ENCODE measurements at regions of chr2 and their contacts with region 1.

Region 1: DNA sequence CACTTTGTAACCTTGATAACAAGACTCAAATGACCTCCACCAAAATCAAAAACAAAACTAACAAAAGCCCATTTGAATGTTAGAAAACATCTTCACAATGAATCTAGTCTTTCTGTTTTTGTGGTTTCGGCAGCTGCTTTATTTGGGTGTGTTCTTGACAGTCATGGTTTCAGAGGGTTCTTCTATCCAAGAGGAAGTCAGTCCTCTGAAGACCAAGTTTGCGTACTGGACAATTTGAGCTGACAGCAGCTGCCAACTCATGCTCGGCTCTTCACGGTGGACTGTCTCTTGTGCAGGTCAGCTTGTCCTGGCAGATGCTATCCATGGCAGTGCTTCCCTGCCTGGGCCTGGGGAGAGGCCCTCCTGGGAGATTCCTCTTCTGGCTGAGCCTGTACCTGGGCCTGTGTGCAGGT is 91.0 kb downstream of the TMEM17 start:
- DNase-seq: no peak
- H3K4me3 ChIP-seq: no peak overlapping the region
- H3K27ac ChIP-seq: no peak overlapping the region
- H3K4me1 ChIP-seq: peaks cover 6% of the 10 kb centered on the region
- H3K27me3 ChIP-seq: no peaks in the 10 kb centered on the region
- CTCF ChIP-seq: no peak
- POLR2A ChIP-seq: no peak

Region 2: DNA sequence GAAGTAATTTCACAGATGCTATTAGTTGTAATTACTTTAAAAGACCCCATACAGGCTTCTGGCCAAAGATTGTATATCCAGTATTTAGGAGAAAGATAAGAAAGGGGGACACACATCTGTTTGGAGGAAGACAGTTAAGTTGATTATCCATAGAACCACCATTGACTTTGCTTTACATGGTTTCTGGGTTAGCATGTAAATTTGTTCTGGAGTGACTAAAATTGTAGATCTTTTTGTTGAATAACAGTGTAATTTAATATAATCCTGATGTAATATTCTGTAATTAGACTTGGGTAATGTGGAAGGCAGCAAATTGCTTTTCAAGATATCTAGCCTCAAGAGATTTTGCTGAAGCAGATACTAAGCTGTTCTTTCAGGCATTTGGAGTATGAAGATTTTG is 492.3 kb before region 1 on chr2:
- CTCF ChIA-PET with region 1: interaction called, 35 read pairs
- POLR2A ChIA-PET with region 1: no interaction called
- dilution Hi-C with region 1: no loop called
- intact Hi-C with region 1: loop called (anchors 1 kb)
- DNase-seq: no peak
- H3K4me3 ChIP-seq: no peak overlapping the region
- H3K27ac ChIP-seq: no peak overlapping the region
- H3K4me1 ChIP-seq: no peaks in the 10 kb centered on the region
- H3K27me3 ChIP-seq: no peaks in the 10 kb centered on the region
- CTCF ChIP-seq: no peak
- POLR2A ChIP-seq: no peak

Region 3: DNA sequence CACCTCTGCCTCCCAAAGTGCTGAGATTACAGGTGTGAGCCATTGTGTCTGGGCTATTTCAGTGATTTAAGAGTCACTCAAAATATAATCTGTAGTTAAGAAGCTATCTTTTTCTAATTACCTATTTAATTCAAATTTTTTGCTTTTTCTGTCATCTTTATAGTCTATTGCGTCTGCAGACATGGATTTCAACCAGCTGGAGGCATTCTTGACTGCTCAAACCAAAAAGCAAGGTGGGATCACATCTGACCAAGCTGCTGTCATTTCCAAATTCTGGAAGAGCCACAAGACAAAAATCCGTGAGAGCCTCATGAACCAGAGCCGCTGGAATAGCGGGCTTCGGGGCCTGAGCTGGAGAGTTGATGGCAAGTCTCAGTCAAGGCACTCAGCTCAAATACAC is 414.5 kb before region 1 on chr2:
- CTCF ChIA-PET with region 1: interaction called, 159 read pairs
- POLR2A ChIA-PET with region 1: no interaction called
- dilution Hi-C with region 1: no loop called
- intact Hi-C with region 1: no loop called
- DNase-seq: no peak
- H3K4me3 ChIP-seq: no peak overlapping the region
- H3K27ac ChIP-seq: no peak overlapping the region
- H3K4me1 ChIP-seq: no peaks in the 10 kb centered on the region
- H3K27me3 ChIP-seq: no peaks in the 10 kb centered on the region
- CTCF ChIP-seq: no peak
- POLR2A ChIP-seq: no peak

Region 4: DNA sequence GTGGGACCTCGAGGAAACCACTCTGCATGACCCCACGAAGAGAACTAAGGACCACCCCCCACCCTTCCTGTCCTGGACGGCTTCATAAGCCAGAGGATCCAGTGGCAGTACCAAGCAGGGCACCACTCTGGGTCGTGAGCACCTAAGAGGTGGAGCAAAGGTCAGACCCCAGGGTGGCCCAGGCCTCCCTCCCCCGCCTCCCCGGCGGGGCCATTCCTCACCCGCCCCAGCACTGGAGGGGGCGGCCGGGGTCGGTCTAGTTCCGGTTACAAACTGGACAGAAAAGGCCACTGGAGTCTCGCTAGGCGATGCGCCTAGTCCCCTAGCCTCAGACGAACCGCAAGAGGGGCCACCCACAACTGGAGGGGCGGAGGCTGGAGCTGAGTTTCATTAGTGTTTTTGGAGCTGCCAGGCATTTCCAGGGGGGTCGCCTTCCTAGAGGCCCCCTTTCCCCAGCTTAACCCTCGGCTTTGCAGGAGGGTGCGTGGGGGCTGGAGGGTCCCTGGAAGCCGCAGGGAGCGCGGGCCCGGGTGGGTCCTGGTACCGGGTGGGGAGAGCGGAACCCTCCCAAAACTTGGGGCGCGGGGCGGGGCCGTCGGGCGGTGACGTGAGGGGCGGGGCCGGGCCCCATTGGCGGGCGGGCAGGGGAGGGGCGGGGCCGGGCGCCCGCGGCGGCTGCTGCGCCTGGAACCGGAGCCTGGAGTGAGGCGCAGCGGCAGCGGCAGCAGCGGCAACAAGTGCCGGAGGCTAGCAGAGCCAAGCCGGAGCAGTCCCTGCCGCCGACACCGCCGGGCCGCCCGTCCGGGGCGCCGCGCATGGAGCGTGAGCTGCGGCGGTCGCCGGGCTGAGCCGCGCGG is 219.4 kb before region 1 on chr2 and contains the start of gene B3GNT2:
- CTCF ChIA-PET with region 1: interaction called, 4 read pairs
- POLR2A ChIA-PET with region 1: no interaction called
- dilution Hi-C with region 1: no loop called
- intact Hi-C with region 1: loop called (anchors 2 kb)
- DNase-seq: peak; percentile 70
- H3K4me3 ChIP-seq: peak within 1 kb of the TSS; percentile 82 to 98 (median 98)
- H3K27ac ChIP-seq: peak within 1 kb of the TSS; percentile 45
- H3K4me1 ChIP-seq: peaks cover 13% of the 10 kb centered on the region
- H3K27me3 ChIP-seq: peaks cover 0 to under 1% of the 10 kb centered on the region in 2 experiments
- CTCF ChIP-seq: no peak
- POLR2A ChIP-seq: peak; percentile 82
- total RNA-seq, gene B3GNT2: 17.8 and 21.2 TPM in 2 replicates

Region 5: GRCh38 chr2:62774555-62775366 is 359.7 kb after region 1 on chr2:
- CTCF ChIA-PET with region 1: interaction called, 10 read pairs
- POLR2A ChIA-PET with region 1: no interaction called
- dilution Hi-C with region 1: no loop called
- intact Hi-C with region 1: no loop called
- DNase-seq: peak; percentile 62
- H3K4me3 ChIP-seq: no peak overlapping the region
- H3K27ac ChIP-seq: no peak overlapping the region
- H3K4me1 ChIP-seq: no peaks in the 10 kb centered on the region
- H3K27me3 ChIP-seq: no peaks in the 10 kb centered on the region
- CTCF ChIP-seq: peak; percentile 38 to 41
- POLR2A ChIP-seq: no peak

Measured in endothelial cell of umbilical vein (primary cell).